A673 (cell line): ENCODE measurements at regions of chr11 and their contacts with region 1.

Region 1: GRCh38 chr11:106697058-106697457 is 321.2 kb downstream of the GUCY1A2 start:
- DNase-seq: no peak
- H3K4me3 ChIP-seq: no peak overlapping the region
- H3K27ac ChIP-seq: no peak overlapping the region
- H3K4me1 ChIP-seq: no peaks in the 10 kb centered on the region
- H3K27me3 ChIP-seq: no peaks in the 10 kb centered on the region
- CTCF ChIP-seq: no peak

Region 2: GRCh38 chr11:106311531-106312230 is 385.4 kb before region 1 on chr11:
- CTCF ChIA-PET with region 1: no interaction called
- POLR2A ChIA-PET with region 1: no interaction called
- intact Hi-C with region 1: loop called (anchors 10 kb)
- DNase-seq: no peak
- H3K4me3 ChIP-seq: no peak overlapping the region
- H3K27ac ChIP-seq: no peak overlapping the region
- H3K4me1 ChIP-seq: no peaks in the 10 kb centered on the region
- H3K27me3 ChIP-seq: peaks cover 28% of the 10 kb centered on the region
- CTCF ChIP-seq: no peak